Heart left ventricle (tissue), 16 donors: ENCODE measurements at regions of chr12 and their contacts with region 1.

Region 1: DNA sequence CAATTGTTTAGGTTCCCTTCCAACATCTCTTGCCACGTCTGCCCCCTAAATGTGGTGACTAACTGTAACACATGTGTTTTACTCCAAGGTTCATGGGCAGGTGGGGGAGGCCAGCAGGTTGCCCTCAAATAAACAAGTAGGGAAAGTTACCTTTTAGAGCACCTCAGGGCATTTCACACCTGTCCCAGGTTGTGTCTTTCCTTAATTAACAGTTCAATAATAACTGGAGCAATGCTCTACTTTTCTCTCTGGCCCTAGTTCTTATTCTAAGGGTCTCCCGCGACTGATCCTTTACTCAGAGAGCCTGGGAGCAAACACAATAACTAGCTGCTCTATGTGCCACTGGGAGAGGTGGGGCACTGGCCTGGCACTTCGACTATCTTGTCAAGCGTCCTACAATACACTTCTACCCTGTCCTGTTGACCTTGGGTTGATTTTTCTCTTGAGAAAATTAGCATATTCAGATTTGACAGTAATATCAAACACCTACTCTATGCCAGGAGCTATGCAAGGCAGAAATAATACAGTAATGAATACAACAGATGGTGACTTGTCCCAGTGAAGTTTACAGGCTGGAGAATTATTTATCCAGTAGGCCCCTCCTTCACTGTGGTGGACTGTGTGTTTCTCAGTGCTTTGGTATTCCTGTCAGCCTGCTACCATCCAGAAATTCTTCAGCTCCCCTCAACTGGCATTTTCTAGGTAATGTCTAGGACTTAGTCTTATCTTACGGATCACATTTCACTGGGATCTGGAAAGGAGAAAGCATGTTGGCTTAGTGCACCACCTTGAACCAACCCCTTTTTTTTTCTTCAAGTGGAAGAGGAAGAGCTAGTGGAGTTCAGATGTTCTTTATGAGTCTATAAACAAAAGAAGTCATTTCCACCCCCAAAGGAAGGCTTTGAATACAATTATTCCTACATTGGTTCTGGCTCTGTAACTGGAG is 202.6 kb downstream of the CRADD start:
- DNase-seq: no peak
- ATAC-seq: peak; percentile 51 to 79 (median 60)
- H3K4me3 ChIP-seq: no peak overlapping the region
- H3K27ac ChIP-seq: peak overlapping the region in 7 of 12 donors; percentile 4 to 36 (median 21)
- H3K4me1 ChIP-seq: peaks cover 0 to 26% (median 16%) of the 10 kb centered on the region in 12 donors
- H3K27me3 ChIP-seq: no peaks in the 10 kb centered on the region
- CTCF ChIP-seq: no peak
- POLR2A ChIP-seq: no peak

Region 2: GRCh38 chr12:93773122-93773871 is 106.5 kb before region 1 on chr12:
- intact Hi-C with region 1: loop called in 1 of 10 experiments (anchors 5 kb)
- DNase-seq: peak in 1 of 5 donors; percentile 33
- ATAC-seq: peak in 2 of 4 donors; percentile 21 to 27
- H3K4me3 ChIP-seq: no peak overlapping the region
- H3K27ac ChIP-seq: peak overlapping the region in 3 of 12 donors; percentile 1 to 18 (median 5)
- H3K4me1 ChIP-seq: peaks cover 9 to 42% (median 29%) of the 10 kb centered on the region in 12 donors
- H3K27me3 ChIP-seq: no peaks in the 10 kb centered on the region
- CTCF ChIP-seq: no peak
- POLR2A ChIP-seq: no peak

Region 3: DNA sequence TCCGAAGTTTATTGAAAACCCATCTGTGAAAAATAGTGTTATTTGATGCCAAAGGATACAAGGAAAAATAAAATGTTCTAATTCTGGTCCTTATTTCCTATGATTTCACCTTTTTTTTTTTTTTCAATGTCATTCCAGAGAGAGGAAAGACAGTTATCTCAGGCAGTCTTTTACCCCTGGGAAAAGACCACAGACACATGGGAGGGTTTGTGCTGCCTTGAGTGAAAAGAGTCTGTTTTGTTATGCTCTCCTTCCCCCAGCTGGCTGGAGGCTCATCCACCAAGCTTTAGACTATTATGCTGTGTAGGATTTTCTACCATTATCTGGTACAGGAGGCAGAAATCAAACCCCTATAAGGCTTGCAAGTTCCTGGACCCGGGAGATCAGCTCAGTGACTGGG is 50.7 kb before region 1 on chr12:
- intact Hi-C with region 1: no loop called
- DNase-seq: peak in 2 of 5 donors; percentile 31 to 51
- ATAC-seq: peak; percentile 53 to 71 (median 56)
- H3K4me3 ChIP-seq: no peak overlapping the region
- H3K27ac ChIP-seq: peak overlapping the region in 11 of 12 donors; percentile 12 to 76 (median 50)
- H3K4me1 ChIP-seq: peaks cover 0 to 61% (median 45%) of the 10 kb centered on the region in 12 donors
- H3K27me3 ChIP-seq: no peaks in the 10 kb centered on the region
- CTCF ChIP-seq: peak in 5 of 12 donors; percentile 10 to 38 (median 15)
- POLR2A ChIP-seq: no peak

Region 4: GRCh38 chr12:93847517-93848474 is 32.0 kb before region 1 on chr12:
- intact Hi-C with region 1: loop called in 1 of 10 experiments (anchors 5 kb)
- DNase-seq: no peak
- ATAC-seq: no peak
- H3K4me3 ChIP-seq: no peak overlapping the region
- H3K27ac ChIP-seq: peak overlapping the region in 2 of 12 donors; percentile 39 to 86
- H3K4me1 ChIP-seq: peaks cover 0 to 23% (median 7%) of the 10 kb centered on the region in 12 donors
- H3K27me3 ChIP-seq: no peaks in the 10 kb centered on the region
- CTCF ChIP-seq: no peak
- POLR2A ChIP-seq: no peak